ENCODE measurements at regions of chr3 and their contacts with region 1.

Region 1: DNA sequence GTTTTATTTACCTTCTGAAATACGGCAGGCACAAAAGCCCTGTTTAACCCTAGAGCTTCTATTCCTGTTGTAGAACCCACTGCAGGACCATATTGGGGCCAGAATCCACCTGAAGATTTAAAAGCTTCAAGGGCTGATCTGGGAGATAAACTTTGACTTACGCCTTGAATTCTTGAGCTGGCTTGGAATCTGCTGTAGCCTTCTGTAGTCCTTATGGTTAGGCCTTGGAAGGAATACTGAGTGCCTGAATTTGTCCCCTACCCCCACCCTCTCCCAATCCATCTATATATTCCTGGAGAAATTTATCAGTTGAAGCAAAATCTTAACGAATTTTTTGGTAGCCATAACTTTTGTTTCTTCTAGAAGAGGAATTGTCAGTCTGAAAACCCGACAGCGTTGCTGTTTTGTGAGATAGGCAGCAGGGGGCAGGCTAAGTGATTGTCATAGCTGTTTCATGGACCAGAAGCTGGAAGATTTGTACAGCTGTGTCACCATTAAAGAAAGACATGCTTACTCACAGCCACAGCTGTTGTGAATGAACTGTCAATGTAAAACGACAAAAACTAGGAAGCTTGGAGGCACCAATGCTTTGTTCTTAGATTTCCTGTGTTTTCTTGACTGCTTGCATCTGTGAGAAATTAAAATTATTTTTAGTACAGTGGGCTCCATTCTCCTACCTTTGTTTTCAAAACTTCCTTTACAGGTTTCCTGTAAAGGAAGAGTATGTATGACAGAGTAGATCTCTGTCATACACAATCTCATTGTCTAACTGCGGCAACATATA is 12.8 kb downstream of the LXN start:
- DNase-seq: peak; percentile 21
- H3K4me3 ChIP-seq: no peak overlapping the region
- CTCF ChIP-seq: peak; percentile 66

Region 2: DNA sequence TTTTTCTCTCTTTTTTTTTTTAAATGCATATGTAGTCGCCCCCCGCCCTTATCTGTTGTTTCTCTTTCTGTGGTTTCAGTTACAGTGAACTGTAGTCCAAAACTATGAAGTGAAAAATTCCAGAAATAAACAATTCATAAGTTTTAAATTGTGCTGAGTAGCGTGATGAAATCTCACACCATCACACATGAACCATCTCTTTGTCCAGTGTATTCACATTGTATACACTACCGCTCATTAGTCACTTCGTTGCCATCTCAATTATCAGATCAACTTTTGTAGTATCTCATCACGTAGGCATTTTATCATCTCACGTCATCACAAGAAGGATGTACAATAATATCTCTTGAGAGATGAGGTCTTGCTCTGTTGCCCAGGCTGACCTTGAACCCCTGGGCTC is 151.2 kb before region 1 on chr3:
- CTCF ChIA-PET with region 1: no interaction called
- POLR2A ChIA-PET with region 1: no interaction called
- DNase-seq: no peak
- H3K4me3 ChIP-seq: no peak overlapping the region
- CTCF ChIP-seq: no peak

Region 3: GRCh38 chr3:158644345-158644908 is 15.2 kb before region 1 on chr3 and contains the start of gene GFM1:
- CTCF ChIA-PET with region 1: interaction called, 103 read pairs
- POLR2A ChIA-PET with region 1: interaction called, 5 read pairs
- DNase-seq: peak; percentile 75
- H3K4me3 ChIP-seq: peak within 1 kb of the TSS; percentile 95
- CTCF ChIP-seq: peak; percentile 94

Region 4: GRCh38 chr3:158683216-158683962 is 23.7 kb after region 1 on chr3:
- CTCF ChIA-PET with region 1: interaction called, 39 read pairs
- POLR2A ChIA-PET with region 1: no interaction called
- DNase-seq: peak; percentile 76
- H3K4me3 ChIP-seq: no peak overlapping the region
- CTCF ChIP-seq: no peak

Region 5: GRCh38 chr3:158713094-158713499 is 53.5 kb after region 1 on chr3:
- CTCF ChIA-PET with region 1: interaction called, 14 read pairs
- POLR2A ChIA-PET with region 1: interaction called, 3 read pairs
- DNase-seq: no peak
- H3K4me3 ChIP-seq: no peak overlapping the region
- CTCF ChIP-seq: no peak

Region 6: GRCh38 chr3:158727206-158728060 is 67.8 kb after region 1 on chr3:
- CTCF ChIA-PET with region 1: interaction called, 94 read pairs
- POLR2A ChIA-PET with region 1: no interaction called
- DNase-seq: no peak
- H3K4me3 ChIP-seq: no peak overlapping the region
- CTCF ChIP-seq: peak; percentile 56

Region 7: GRCh38 chr3:158801696-158802408 is 142.2 kb after region 1 on chr3 and contains the start of gene MFSD1:
- CTCF ChIA-PET with region 1: interaction called, 43 read pairs
- POLR2A ChIA-PET with region 1: no interaction called
- DNase-seq: peak; percentile 44
- H3K4me3 ChIP-seq: peak within 1 kb of the TSS; percentile 83
- CTCF ChIP-seq: no peak

Measured in AG04449 (cell line).